ENCODE measurements at regions of chr7 and their contacts with region 1.

Region 1: DNA sequence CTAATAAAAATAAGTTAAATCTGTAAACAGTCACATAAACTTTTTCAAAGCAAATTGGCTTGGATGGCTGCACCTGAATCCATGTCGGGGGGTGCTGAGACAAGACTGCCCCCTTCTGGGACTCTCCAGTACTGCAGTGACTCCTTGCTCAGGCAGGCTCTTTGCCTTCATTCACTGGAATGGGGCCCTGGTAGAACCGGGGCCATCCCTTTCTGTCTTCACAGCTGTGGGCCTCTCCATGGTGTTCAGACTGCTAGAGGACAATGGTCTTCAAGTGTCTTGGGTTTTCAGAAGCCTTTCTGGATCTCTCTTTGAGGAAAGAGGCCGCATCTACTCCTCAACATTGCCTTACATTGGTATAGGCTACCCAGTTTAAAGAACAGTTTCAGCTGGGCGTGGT is 16.1 kb upstream of the IMPDH1 start:
- DNase-seq: peak; percentile 16
- H3K4me3 ChIP-seq: no peak overlapping the region
- H3K27ac ChIP-seq: no peak overlapping the region
- H3K27me3 ChIP-seq: no peaks in the 10 kb centered on the region
- CTCF ChIP-seq: peak; percentile 97

Region 2: DNA sequence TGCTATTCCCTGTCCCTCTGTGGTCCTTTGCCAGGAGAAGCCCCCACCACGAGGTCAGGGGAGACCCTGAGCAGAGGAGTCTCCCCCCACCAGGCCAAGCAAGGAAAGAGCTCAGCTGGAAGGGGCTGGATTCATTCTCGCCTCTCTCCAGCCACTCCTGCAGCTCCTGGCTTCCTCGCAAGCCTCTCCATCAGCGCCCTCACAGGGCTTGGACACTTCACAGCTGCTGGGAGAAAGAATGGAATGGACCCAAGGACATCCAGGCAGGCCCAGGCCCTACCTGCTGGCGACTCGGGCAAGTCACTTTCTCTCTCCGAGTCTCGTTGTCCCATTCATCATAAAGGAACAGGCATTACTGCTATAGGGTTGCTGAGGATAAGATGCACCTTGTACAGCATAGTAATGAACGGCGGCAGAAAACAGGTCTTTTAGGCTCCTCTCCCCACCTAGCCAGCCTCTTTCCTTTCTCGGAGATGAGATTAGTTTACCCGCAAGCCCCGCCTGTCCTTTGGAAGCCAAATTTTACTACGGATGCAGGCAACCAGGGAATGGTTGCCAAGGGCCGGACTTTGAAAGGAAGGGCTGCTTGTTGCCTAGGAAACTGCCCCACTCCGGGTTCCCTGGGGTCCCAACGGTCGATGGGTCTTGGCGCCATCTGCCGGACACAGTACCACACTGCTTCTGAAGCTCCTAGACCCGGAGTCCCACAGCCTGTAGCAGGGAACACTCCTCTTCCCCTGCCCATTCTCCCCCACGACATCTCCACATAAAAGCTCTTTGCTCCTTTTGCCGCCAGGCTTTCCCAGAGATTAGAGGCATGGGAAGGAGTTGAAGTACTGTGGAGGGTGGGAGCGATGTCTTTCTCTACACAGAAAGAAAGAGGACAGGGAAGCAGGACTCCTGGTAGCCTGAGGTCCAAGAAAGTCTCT is 38.4 kb before region 1 on chr7:
- CTCF ChIA-PET with region 1: interaction called, 10 read pairs
- POLR2A ChIA-PET with region 1: no interaction called
- DNase-seq: peak; percentile 24
- H3K4me3 ChIP-seq: no peak overlapping the region
- H3K27ac ChIP-seq: no peak overlapping the region
- H3K27me3 ChIP-seq: peaks cover 20% of the 10 kb centered on the region
- CTCF ChIP-seq: peak; percentile 88

Region 3: DNA sequence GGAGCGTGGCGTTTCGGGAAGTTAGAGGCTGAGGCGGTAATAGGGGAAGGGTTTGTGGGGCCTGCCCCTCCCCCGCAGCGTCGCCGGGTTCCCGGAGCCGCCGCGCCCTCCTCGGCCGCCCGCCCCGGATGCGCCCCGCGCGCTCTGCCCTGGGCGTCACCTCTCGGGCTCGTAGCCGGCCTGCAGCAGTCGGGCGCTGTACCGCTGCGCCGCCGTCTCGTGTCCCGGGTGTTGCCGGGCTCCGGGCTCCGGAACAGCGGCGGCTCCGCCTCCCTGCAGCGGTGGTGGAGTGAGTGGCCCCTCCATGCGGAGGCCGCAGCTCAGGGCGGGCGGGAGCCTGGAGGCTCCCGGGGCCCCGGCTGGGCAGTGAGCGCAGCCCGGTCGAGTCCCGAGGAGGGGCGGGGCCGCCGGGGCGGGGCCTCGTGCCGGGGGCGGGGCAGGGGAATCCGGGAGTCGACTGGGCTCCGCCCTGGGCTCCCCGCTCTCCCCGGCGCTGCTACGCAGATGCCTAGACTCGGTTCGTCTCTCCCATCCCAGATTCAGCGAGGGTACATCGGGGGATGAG is 16.2 kb before region 1 on chr7 and contains the start of gene IMPDH1:
- CTCF ChIA-PET with region 1: interaction called, 138 read pairs
- POLR2A ChIA-PET with region 1: interaction called, 4 read pairs
- DNase-seq: peak; percentile 13
- H3K4me3 ChIP-seq: peak within 1 kb of the TSS; percentile 82
- H3K27ac ChIP-seq: peak within 1 kb of the TSS; percentile 80
- H3K27me3 ChIP-seq: peaks cover 8% of the 10 kb centered on the region
- CTCF ChIP-seq: no peak
- polyA plus RNA-seq, gene IMPDH1: 43.8 and 56.6 TPM in 2 replicates

Region 4: GRCh38 chr7:128447941-128448564 is 22.2 kb after region 1 on chr7:
- CTCF ChIA-PET with region 1: interaction called, 110 read pairs
- POLR2A ChIA-PET with region 1: no interaction called
- DNase-seq: no peak
- H3K4me3 ChIP-seq: no peak overlapping the region
- H3K27ac ChIP-seq: no peak overlapping the region
- H3K27me3 ChIP-seq: peaks cover 19% of the 10 kb centered on the region
- CTCF ChIP-seq: no peak

Region 5: GRCh38 chr7:128883622-128884501 is 458.0 kb after region 1 on chr7:
- CTCF ChIA-PET with region 1: interaction called, 11 read pairs
- POLR2A ChIA-PET with region 1: no interaction called
- DNase-seq: no peak
- H3K4me3 ChIP-seq: no peak overlapping the region
- H3K27ac ChIP-seq: no peak overlapping the region
- H3K27me3 ChIP-seq: no peaks in the 10 kb centered on the region
- CTCF ChIP-seq: peak; percentile 85

Measured in AG04450 (cell line).